Transverse colon (tissue), 4 donors: ENCODE measurements at regions of chr5 and their contacts with region 1.

Region 1: GRCh38 chr5:84218546-84218945 is 166.1 kb downstream of the EDIL3 start:
- DNase-seq: no peak
- H3K4me3 ChIP-seq: no peak overlapping the region
- H3K27ac ChIP-seq: no peak overlapping the region
- H3K4me1 ChIP-seq: peaks cover 0 to 5% (median 0%) of the 10 kb centered on the region in 4 donors
- H3K27me3 ChIP-seq: no peaks in the 10 kb centered on the region
- CTCF ChIP-seq: no peak
- EP300 ChIP-seq: no peak
- POLR2A ChIP-seq: no peak

Region 2: DNA sequence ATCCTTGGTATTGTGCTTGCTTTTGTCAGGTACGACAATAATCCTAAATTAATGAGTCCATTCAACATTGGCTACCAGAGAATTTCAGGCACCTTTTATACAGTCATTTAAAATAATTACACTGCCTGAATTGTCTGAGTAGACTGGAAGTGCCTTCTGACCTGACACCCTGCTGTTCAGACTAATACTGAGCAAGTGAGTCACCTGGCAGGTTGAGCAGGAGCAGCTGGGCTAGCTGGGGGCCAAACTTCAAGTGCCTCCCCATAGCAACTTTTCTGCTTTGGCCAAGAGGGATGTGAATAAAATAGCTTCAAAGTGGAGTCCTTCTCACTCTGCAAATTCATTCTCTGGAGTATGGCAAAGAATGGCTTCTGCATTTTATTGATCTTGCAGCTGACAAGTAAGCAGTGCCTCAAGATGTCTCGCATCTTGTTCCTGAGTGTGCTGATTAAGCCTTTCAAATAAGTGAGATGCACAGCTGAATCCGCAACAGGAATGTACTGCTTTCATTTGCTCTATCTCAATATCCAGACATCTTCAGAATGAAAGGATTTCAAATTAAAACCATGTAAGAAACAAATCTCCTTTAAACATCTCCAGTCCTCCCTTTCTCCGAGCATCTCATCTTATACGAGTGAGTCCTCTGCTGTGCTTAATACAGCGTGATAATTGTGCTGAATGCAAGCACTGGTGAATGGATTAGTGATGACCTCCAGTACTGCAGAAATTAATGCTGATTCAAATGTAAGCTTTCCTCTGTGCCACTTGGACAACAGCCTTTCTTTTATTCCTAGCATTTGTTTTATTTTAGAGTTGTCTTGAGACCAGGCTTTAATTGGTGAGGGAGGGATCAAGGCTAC is 105.1 kb before region 1 on chr5:
- in situ Hi-C with region 1: no loop called
- intact Hi-C with region 1: no loop called
- DNase-seq: no peak
- H3K4me3 ChIP-seq: no peak overlapping the region
- H3K27ac ChIP-seq: no peak overlapping the region
- H3K4me1 ChIP-seq: no peaks in the 10 kb centered on the region
- H3K27me3 ChIP-seq: no peaks in the 10 kb centered on the region
- CTCF ChIP-seq: no peak
- EP300 ChIP-seq: no peak
- POLR2A ChIP-seq: no peak

Region 3: DNA sequence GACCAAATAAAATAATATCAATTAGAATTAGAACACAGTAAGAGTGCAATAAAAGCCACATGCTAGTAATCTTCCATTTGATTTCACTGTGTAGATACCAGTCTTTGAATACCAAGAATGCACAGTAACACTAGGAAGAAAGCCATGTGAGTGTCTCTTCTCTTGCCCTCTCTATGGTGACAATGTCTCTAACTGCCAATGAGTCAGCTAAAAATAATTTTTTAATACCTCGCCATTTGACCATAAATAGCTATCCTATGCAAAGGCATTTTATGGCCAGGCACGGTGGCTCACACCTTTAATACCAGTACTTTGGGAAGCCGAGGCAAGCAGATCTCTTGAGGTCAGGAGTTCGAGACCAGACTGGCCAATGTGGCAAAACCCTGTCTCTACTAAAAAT is 135.6 kb after region 1 on chr5:
- in situ Hi-C with region 1: no loop called
- intact Hi-C with region 1: no loop called
- DNase-seq: no peak
- H3K4me3 ChIP-seq: no peak overlapping the region
- H3K27ac ChIP-seq: no peak overlapping the region
- H3K4me1 ChIP-seq: no peaks in the 10 kb centered on the region
- H3K27me3 ChIP-seq: no peaks in the 10 kb centered on the region
- CTCF ChIP-seq: no peak
- EP300 ChIP-seq: no peak
- POLR2A ChIP-seq: no peak

Region 4: DNA sequence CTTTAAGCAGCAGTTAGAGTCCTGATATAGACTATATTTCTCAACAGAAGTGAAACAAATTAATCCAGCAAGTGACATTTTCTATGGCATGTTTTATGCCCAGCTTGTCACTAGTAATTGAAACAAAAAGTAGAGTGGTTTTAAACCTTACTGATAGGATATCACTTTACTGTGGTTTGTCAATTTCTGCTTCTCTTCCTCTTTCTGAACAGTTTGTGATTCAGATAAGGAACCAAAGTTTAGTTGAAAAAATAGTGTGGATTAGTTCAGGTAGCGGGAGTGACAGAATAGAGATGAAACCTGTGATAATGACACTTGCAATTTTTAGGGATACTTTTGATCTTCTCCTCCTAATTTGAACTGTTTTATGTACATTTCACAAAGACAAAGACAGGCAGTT is 651.8 kb after region 1 on chr5:
- in situ Hi-C with region 1: no loop called
- intact Hi-C with region 1: loop called (anchors 5 kb)
- DNase-seq: no peak
- H3K4me3 ChIP-seq: no peak overlapping the region
- H3K27ac ChIP-seq: no peak overlapping the region
- H3K4me1 ChIP-seq: no peaks in the 10 kb centered on the region
- H3K27me3 ChIP-seq: no peaks in the 10 kb centered on the region
- CTCF ChIP-seq: no peak
- EP300 ChIP-seq: no peak
- POLR2A ChIP-seq: no peak

Region 5: DNA sequence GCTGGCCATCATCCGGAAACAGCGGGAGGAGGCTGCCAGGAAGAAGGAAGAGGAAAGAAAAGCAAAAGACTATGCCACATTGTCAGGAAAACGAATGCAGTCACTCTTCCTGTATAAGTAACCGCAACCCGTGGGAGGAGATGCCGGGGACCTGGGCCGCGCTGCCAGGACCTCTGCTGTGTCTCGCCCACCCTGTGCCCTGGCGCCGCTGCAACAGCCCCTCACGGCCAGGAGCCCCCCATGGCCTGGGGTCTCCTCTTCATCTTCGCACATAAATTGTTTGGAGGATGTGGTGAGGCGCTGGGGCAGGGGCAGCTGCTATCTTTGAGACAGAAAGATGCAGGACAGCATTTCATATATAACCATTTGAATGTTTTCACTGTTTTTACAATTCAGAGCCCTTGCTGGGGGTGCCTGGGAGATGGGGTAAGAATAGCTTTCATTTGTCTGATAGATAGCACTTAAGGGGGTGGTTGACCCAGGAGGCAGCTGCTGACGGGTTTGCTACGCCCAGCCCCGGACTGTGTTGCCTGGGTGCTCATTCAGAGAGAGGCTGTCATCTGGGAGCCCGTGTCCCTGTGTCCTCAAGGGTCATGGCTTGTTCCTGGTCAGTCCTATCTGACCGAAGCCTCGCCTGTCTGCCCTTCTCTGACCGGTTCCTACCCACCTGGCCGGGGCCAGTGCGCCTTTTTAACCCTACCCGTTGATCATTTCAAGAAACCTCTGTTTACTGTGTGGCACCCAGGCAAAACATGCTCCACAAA is 1331.5 kb after region 1 on chr5:
- in situ Hi-C with region 1: no loop called
- intact Hi-C with region 1: loop called (anchors 5 kb)
- DNase-seq: no peak
- H3K4me3 ChIP-seq: no peak overlapping the region
- H3K27ac ChIP-seq: no peak overlapping the region
- H3K4me1 ChIP-seq: no peaks in the 10 kb centered on the region
- H3K27me3 ChIP-seq: no peaks in the 10 kb centered on the region
- CTCF ChIP-seq: no peak
- EP300 ChIP-seq: no peak
- POLR2A ChIP-seq: no peak